Caco-2 (cell line): ENCODE measurements at regions of chr2 and their contacts with region 1.

Region 1: GRCh38 chr2:61135510-61135909 is 26.5 kb upstream of the C2orf74 start:
- DNase-seq: peak in 1 of 2 experiments; percentile 16
- H3K4me3 ChIP-seq: no peak overlapping the region
- H3K4me3 Mint-ChIP-seq: no peak overlapping the region
- H3K27ac Mint-ChIP-seq: no peak overlapping the region
- H3K4me1 ChIP-seq: no peaks in the 10 kb centered on the region
- H3K4me1 Mint-ChIP-seq: no peaks in the 10 kb centered on the region
- H3K27me3 ChIP-seq: no peaks in the 10 kb centered on the region
- H3K27me3 Mint-ChIP-seq: peaks cover 3% of the 10 kb centered on the region
- CTCF ChIP-seq: no peak

Region 2: DNA sequence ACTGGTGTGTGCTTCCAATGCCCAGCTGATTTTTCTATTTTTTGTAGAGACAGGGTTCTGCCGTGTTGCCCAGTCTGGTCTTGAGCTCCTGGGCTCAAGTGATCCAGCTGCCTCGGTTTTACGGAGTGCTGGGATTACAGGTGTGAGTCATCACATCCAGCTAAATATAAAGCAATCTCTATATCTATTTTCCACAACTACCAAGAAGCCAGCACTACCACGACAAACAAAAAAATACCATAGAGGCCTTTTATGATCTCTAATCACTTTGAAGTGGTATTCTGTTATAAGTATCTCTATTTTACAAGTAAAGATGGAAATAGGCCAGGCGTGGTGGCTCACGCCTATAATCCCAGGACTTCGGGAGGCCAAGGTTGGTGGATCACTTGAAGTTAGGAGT is 61.2 kb after region 1 on chr2:
- CTCF ChIA-PET with region 1: no interaction called
- POLR2A ChIA-PET with region 1: no interaction called
- intact Hi-C with region 1: no loop called
- DNase-seq: no peak
- H3K4me3 ChIP-seq: no peak overlapping the region
- H3K4me3 Mint-ChIP-seq: no peak overlapping the region
- H3K27ac Mint-ChIP-seq: no peak overlapping the region
- H3K4me1 ChIP-seq: no peaks in the 10 kb centered on the region
- H3K4me1 Mint-ChIP-seq: no peaks in the 10 kb centered on the region
- H3K27me3 ChIP-seq: no peaks in the 10 kb centered on the region
- H3K27me3 Mint-ChIP-seq: no peaks in the 10 kb centered on the region
- CTCF ChIP-seq: no peak

Region 3: DNA sequence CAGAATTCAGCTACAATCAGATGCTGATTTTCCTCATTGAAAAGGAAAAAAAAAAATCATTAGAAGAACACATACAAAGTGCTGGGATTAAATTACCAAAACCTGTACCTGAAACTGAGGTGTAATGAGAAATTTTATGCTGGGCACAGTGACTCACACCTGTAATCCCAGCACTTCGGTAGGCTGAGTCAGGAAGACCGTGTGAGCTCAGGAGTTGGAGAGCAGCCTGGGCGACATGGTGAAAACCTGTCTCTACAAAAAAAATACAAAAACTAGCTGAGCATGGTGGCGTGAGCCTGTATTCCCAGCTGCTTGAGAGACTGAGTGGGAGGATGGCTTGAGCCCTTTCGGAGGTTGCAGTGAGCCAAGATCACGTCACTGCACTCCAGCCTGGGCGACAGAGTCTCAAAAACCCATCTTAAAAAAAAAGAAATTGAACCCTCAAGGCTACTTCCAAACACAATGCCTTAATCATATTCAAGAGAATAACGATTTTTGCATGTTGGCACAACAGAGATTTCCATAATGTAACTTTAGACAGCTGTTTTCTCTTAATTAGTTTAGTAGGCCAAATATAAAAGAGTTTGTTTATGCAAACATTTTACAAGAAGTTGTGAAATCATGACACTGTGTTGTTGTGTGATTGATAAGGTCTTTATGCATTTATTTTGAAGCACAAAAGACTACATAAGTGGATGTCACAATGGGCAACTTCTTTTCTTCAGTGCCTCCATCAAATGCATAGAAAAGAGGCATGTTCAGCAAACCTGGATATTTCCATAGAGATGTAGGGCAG is 654.5 kb after region 1 on chr2:
- CTCF ChIA-PET with region 1: no interaction called
- POLR2A ChIA-PET with region 1: no interaction called
- intact Hi-C with region 1: loop called (anchors 10 kb)
- DNase-seq: no peak
- H3K4me3 ChIP-seq: no peak overlapping the region
- H3K4me3 Mint-ChIP-seq: no peak overlapping the region
- H3K27ac Mint-ChIP-seq: no peak overlapping the region
- H3K4me1 ChIP-seq: no peaks in the 10 kb centered on the region
- H3K4me1 Mint-ChIP-seq: peaks cover 6% of the 10 kb centered on the region
- H3K27me3 ChIP-seq: no peaks in the 10 kb centered on the region
- H3K27me3 Mint-ChIP-seq: peaks cover 4% of the 10 kb centered on the region
- CTCF ChIP-seq: no peak